Naive thymus-derived CD4-positive, alpha-beta T cell (primary cell): ENCODE measurements at regions of chr19 and their contacts with region 1.

Region 1: GRCh38 chr19:1039646-1040475 is at the start of gene ABCA7:
- DNase-seq: peak; percentile 98 to 100 (median 99)
- ATAC-seq: peak; percentile 96
- H3K4me3 ChIP-seq: peak within 1 kb of the TSS; percentile 74
- H3K4me3 Mint-ChIP-seq: peak within 1 kb of the TSS; percentile 95 to 100 (median 98)
- H3K27ac ChIP-seq: peak within 1 kb of the TSS; percentile 74
- H3K27ac Mint-ChIP-seq: peak within 1 kb of the TSS; percentile 79 to 98 (median 95)
- H3K4me1 ChIP-seq: peaks cover 30 to 42% of the 10 kb centered on the region in 2 donors
- H3K4me1 Mint-ChIP-seq: peaks cover 29 to 61% (median 54%) of the 10 kb centered on the region in 7 donors
- H3K27me3 ChIP-seq: no peaks in the 10 kb centered on the region
- H3K27me3 Mint-ChIP-seq: no peaks in the 10 kb centered on the region
- total RNA-seq, gene ABCA7: 57.8 to 323 (median 155) TPM

Region 2: DNA sequence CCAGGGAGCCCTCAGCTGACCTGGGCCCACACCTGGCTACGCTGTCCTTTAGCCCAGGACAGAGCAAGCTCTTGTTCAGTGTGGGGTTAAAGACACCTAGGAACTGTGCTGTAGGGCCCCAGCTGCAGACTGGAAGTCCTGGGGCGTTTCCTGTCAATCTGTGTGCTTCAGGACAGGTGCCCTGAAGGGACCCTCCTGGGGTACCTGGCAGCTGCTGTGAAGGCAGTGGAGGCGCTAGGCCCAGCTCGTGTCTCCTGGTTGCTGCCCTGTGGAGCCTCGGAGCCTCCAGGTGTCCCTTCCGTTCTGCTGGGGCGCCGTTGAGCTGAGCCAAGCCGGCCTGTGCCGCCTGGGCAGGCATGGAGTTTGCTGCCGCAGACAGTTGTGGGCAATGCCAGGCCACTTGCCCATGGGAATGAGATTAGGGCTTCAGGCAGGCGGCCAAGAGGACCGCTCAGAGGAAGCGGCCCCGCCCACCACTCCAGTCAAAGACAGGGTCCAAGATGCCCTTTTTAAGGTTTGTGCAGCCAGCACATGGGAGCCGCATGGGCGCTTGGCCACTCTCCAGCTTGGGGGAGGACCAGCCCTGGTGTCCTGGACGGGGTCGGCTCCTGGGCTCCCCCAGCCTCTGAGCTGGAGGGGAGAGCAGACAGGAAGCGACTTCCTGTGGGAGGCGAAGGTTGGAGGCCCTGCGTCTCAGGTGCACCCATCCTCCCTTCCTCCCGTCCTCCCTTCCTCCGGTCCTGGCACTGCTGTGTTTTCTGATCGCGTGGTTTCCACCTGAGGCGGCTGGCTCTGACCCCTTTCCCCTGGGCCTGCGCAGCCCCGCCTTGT is 238.6 kb before region 1 on chr19:
- CTCF ChIA-PET with region 1: no interaction called
- POLR2A ChIA-PET with region 1: no interaction called
- intact Hi-C with region 1: no loop called
- DNase-seq: no peak
- ATAC-seq: no peak
- H3K4me3 ChIP-seq: peak overlapping the region; percentile 29
- H3K4me3 Mint-ChIP-seq: peak overlapping the region; percentile 52 to 90 (median 72)
- H3K27ac ChIP-seq: peak overlapping the region; percentile 53
- H3K27ac Mint-ChIP-seq: peak overlapping the region in 7 of 9 donors; percentile 42 to 90 (median 70)
- H3K4me1 ChIP-seq: peaks cover 38 to 43% of the 10 kb centered on the region in 2 donors
- H3K4me1 Mint-ChIP-seq: peaks cover 34 to 55% (median 44%) of the 10 kb centered on the region in 7 donors
- H3K27me3 ChIP-seq: no peaks in the 10 kb centered on the region
- H3K27me3 Mint-ChIP-seq: peaks cover 0 to 2% (median 0%) of the 10 kb centered on the region in 5 donors

Region 3: DNA sequence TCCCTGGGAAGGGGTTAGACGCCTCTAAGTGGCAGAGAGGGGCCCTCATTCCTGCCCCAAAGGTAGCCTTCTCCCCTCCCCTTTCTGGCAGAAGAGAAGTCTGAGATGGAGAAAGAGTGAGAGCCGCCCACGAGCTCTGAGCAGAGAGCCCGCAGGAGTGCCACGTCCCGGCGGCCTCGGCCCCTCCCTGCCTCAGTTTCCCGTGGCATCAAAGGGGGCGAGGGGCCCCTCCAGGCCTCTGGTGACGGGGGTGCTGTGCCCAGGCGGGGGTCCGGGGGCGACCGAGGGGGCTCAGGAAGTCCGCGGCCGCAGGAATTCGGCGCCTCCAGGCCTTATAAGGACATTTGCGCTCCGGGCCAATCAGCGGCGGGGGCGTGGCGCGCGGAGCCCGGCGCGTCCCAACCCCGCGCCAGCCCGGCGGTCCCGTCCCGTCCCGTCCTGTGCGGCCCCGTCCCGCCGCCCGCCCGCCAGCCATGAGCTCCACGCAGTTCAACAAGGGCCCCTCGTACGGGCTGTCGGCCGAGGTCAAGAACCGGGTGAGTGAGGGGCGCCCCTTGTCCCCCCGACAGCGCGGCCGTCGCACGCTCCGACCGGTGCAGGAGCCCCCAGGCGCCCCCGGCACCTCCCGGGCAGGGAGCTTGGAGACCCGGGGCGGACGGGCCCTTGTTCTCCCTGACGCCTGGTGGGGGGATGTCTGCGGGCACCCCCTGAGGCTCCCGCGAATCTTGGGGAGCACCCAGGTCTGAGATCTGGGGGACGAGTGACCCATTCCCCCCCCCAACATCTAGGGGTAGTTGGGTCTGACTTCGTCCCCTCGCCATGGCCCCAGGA is 13.5 kb before region 1 on chr19 and contains the start of gene CNN2:
- CTCF ChIA-PET with region 1: interaction called, 13 read pairs
- POLR2A ChIA-PET with region 1: interaction called, 342 read pairs
- intact Hi-C with region 1: loop called (anchors 1 kb)
- DNase-seq: peak in 8 of 9 donors; percentile 49 to 85 (median 58)
- ATAC-seq: peak; percentile 49
- H3K4me3 ChIP-seq: peak within 1 kb of the TSS; percentile 99
- H3K4me3 Mint-ChIP-seq: peak within 1 kb of the TSS; percentile 93 to 99 (median 97)
- H3K27ac ChIP-seq: peak within 1 kb of the TSS; percentile 85
- H3K27ac Mint-ChIP-seq: peak within 1 kb of the TSS; percentile 88 to 98 (median 94)
- H3K4me1 ChIP-seq: peaks cover 21 to 31% of the 10 kb centered on the region in 2 donors
- H3K4me1 Mint-ChIP-seq: peaks cover 0 to 40% (median 26%) of the 10 kb centered on the region in 7 donors
- H3K27me3 ChIP-seq: no peaks in the 10 kb centered on the region
- H3K27me3 Mint-ChIP-seq: peaks cover 0 to 5% (median 0%) of the 10 kb centered on the region in 5 donors
- total RNA-seq, gene CNN2: 234 to 440 (median 240) TPM

Region 4: GRCh38 chr19:1074544-1075283 is 34.9 kb after region 1 on chr19:
- CTCF ChIA-PET with region 1: no interaction called
- POLR2A ChIA-PET with region 1: interaction called, 144 read pairs
- intact Hi-C with region 1: loop called in 1 of 2 experiments (anchors 5 kb)
- DNase-seq: peak; percentile 81 to 95 (median 93)
- ATAC-seq: peak; percentile 61
- H3K4me3 ChIP-seq: peak overlapping the region; percentile 68
- H3K4me3 Mint-ChIP-seq: peak overlapping the region; percentile 80 to 97 (median 89)
- H3K27ac ChIP-seq: peak overlapping the region; percentile 92
- H3K27ac Mint-ChIP-seq: peak overlapping the region; percentile 91 to 100 (median 99)
- H3K4me1 ChIP-seq: peaks cover 67 to 72% of the 10 kb centered on the region in 2 donors
- H3K4me1 Mint-ChIP-seq: peaks cover 27 to 53% (median 43%) of the 10 kb centered on the region in 7 donors
- H3K27me3 ChIP-seq: no peaks in the 10 kb centered on the region
- H3K27me3 Mint-ChIP-seq: no peaks in the 10 kb centered on the region

Region 5: DNA sequence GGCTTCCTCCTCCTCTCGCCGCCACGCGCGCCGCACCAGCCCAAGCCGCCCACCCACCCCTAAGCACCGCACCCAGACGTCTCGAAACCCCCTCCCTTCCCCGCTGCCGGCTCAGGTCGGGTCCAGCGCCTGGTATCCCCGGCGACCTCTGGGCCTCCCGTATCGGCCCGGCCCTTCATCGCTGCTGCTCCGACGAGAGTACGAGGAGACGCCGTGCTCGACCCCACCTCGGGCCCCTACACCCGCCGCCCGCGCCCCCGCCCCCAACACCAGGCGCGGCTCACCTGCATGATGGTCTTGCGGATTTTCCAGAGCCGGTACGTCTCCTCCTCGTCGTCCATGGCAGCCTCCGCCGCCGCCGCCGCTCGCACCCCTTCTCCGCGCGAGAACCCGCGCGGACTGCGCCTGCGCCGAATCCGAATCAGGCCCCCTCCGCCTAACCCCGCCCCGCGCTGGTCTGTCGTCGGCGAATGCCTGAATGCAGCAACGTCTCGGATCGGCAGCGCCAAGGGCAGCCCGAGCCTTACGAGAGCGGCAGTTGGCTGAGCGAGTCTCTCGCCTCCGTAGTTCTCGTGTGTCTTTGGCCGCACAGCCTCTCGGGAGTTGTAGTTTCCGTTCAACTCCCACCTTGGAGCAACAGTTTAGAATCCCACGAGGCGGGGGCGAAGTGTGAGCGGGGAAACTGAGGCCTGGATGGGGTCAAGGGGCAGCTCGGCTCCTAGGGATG is 55.3 kb after region 1 on chr19 and contains the start of gene POLR2E:
- CTCF ChIA-PET with region 1: no interaction called
- POLR2A ChIA-PET with region 1: interaction called, 33 read pairs
- intact Hi-C with region 1: loop called in 1 of 2 experiments (anchors 2 kb)
- DNase-seq: peak; percentile 97 to 99 (median 99)
- ATAC-seq: peak; percentile 98
- H3K4me3 ChIP-seq: peak within 1 kb of the TSS; percentile 68
- H3K4me3 Mint-ChIP-seq: peak within 1 kb of the TSS; percentile 80 to 97 (median 92)
- H3K27ac ChIP-seq: peak within 1 kb of the TSS; percentile 71
- H3K27ac Mint-ChIP-seq: peak within 1 kb of the TSS; percentile 87 to 97 (median 93)
- H3K4me1 ChIP-seq: peaks cover 18 to 23% of the 10 kb centered on the region in 2 donors
- H3K4me1 Mint-ChIP-seq: peaks cover 10 to 59% (median 44%) of the 10 kb centered on the region in 7 donors
- H3K27me3 ChIP-seq: no peaks in the 10 kb centered on the region
- H3K27me3 Mint-ChIP-seq: no peaks in the 10 kb centered on the region
- total RNA-seq, gene POLR2E: 75.3 to 157 (median 82.1) TPM

Region 6: DNA sequence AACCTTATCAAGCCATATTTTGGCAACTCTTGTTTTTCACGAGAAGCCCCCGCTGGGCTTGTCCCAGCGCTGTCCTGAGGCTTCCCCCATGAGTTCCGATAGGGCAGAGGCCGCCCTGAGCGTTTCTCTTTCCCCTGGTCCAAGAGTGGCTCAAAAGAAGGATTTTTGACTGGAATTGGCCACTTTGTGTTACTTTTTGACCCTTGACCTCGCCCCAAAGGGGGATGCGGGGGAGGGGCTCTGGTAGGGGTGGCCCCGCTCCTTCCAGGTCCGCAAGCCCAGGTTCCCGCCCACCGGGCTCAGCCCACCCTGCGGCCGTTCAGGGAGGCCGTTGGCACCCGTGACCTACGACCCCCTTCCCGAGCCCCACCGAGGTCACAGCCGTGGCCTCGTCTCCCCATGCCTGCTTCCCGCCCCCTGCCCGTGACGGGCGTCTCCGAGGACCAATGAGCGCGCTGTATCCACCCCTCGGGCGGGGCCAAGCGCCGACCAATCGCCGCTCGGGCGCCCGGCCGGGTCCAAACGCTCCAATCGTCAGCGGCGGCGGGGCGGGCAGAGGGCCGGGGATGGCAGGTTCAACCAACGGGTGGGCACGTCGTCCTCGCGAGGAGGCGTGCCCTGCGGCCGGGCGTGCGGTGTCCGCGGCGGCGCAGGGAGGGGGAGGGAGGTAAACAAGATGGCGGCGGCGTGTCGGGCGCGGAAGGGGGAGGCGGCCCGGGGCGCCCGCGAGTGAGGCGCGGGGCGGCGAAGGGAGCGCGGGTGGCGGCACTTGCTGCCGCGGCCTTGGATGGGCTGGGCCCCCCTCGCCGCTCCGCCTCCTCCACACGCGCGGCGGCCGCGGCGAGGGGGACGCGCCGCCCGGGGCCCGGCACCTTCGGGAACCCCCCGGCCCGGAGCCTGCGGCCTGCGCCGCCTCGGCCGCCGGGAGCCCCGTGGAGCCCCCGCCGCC is 165.5 kb after region 1 on chr19 and contains the start of gene STK11:
- CTCF ChIA-PET with region 1: no interaction called
- POLR2A ChIA-PET with region 1: no interaction called
- intact Hi-C with region 1: loop called in 1 of 2 experiments (anchors 1 kb)
- DNase-seq: peak; percentile 98 to 100 (median 99)
- ATAC-seq: peak; percentile 97
- H3K4me3 ChIP-seq: peak within 1 kb of the TSS; percentile 81
- H3K4me3 Mint-ChIP-seq: peak within 1 kb of the TSS; percentile 92 to 98 (median 94)
- H3K27ac ChIP-seq: peak within 1 kb of the TSS; percentile 74
- H3K27ac Mint-ChIP-seq: peak within 1 kb of the TSS; percentile 85 to 94 (median 88)
- H3K4me1 ChIP-seq: peaks cover 27 to 34% of the 10 kb centered on the region in 2 donors
- H3K4me1 Mint-ChIP-seq: peaks cover 15 to 45% (median 29%) of the 10 kb centered on the region in 7 donors
- H3K27me3 ChIP-seq: no peaks in the 10 kb centered on the region
- H3K27me3 Mint-ChIP-seq: no peaks in the 10 kb centered on the region
- total RNA-seq, gene STK11: 67.7 to 91.3 (median 71.6) TPM